ENCODE measurements at regions of chr7 and their contacts with region 1.

Region 1: DNA sequence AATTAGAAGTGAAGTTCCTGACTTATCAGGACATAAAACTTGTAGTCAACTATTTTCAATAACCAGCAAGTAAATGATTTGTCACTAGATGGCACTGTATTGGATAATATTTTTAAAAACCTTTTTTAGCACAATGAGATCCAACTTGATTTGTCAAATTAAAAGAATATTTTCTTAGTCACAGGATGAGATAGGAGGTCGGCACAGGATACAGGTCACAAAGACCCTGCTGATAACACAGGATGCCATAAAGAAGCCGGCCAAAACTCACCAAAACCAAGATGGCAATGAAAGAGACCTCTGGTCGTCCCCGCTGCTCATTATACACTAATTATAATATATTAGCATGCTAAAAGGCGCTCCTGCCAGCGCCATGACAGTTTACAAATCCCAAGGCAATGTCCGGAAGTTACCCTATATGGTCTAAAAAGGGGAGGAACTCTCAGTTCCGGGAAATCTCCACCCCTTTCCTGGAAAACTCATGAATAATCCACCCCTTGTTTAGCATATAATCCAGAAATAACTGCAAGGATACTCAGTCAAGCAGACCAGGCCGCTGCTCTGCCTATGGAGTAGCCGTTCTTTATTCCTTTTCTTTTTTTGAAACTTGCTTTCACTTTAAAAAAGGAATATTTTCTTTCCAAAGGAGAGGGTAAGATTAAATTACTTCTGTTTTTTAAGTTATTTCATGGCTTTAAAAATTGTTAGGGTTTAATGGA is 255.7 kb upstream of the MKLN1 start:
- DNase-seq: peak; percentile 37
- ATAC-seq: no peak
- H3K4me3 Mint-ChIP-seq: peak overlapping the region; percentile 24
- H3K27ac Mint-ChIP-seq: peak overlapping the region; percentile 83
- H3K4me1 Mint-ChIP-seq: peaks cover 84% of the 10 kb centered on the region
- H3K27me3 Mint-ChIP-seq: no peaks in the 10 kb centered on the region
- CTCF ChIP-seq: peak; percentile 55

Region 2: DNA sequence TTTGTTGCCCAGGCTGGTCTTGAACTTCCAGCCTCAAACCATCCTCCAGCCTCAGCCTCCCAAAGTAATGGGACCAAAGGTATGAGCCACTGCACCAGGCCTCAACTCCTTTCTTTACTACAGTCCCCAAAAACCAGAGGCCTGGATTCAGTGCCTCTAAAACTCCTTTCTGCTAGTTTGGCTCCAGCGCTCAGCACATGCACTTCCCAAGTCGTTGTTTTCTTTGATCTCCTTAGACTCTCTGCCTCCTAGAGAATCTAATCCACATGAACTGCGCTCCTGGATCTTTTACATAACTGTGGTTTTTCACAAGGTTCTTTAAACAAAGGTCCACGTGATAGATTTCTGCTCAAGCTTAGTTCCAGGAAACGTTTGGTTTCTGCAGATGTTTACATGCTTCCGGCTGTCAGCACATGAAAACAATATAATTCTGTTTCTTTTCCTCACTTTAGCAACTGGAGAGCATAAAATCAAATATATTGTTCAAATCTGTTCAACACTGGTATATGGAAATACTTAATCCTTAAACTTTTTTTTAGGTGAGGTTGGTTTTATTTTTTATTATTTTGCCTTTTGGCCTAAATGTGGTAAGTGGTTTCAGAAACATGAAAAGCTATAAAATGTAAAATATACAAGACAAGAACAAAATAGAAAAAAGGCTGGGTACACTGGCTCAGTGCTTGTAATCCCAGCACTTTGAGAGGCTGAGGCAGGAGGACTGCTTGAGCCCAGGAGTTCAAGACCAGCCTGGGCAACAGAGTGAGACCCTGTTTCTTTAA is 14.7 kb before region 1 on chr7:
- CTCF ChIA-PET with region 1: interaction called, 38 read pairs
- POLR2A ChIA-PET with region 1: interaction called, 3 read pairs
- intact Hi-C with region 1: no loop called
- DNase-seq: no peak
- ATAC-seq: peak; percentile 53
- H3K4me3 Mint-ChIP-seq: peak overlapping the region; percentile 43
- H3K27ac Mint-ChIP-seq: peak overlapping the region; percentile 97
- H3K4me1 Mint-ChIP-seq: peaks cover 65% of the 10 kb centered on the region
- H3K27me3 Mint-ChIP-seq: no peaks in the 10 kb centered on the region
- CTCF ChIP-seq: no peak

Region 3: GRCh38 chr7:131212114-131212513 is 140.2 kb after region 1 on chr7:
- CTCF ChIA-PET with region 1: no interaction called
- POLR2A ChIA-PET with region 1: no interaction called
- intact Hi-C with region 1: no loop called
- DNase-seq: no peak
- ATAC-seq: no peak
- H3K4me3 Mint-ChIP-seq: no peak overlapping the region
- H3K27ac Mint-ChIP-seq: no peak overlapping the region
- H3K4me1 Mint-ChIP-seq: no peaks in the 10 kb centered on the region
- H3K27me3 Mint-ChIP-seq: no peaks in the 10 kb centered on the region
- CTCF ChIP-seq: no peak

Region 4: DNA sequence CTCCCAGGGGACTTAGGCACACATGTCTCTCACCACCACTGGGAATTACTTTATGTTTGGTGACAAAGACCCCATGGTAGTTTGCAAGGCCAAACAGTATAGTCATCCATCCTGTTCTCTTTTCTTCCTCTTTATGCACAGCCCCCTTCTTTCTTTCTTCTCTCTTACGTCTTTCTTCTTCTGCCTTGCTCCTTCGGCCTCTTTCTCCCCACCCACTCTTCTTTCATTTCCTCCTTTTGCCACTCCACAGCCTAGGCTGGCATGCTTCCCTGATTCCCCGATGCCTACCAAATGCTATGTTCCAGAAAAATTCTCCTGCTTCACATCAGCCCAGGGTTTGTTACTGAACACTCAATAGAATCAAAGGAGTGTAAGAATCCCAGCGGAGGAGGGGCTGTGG is 193.3 kb after region 1 on chr7:
- CTCF ChIA-PET with region 1: no interaction called
- POLR2A ChIA-PET with region 1: no interaction called
- intact Hi-C with region 1: no loop called
- DNase-seq: no peak
- ATAC-seq: no peak
- H3K4me3 Mint-ChIP-seq: no peak overlapping the region
- H3K27ac Mint-ChIP-seq: no peak overlapping the region
- H3K4me1 Mint-ChIP-seq: no peaks in the 10 kb centered on the region
- H3K27me3 Mint-ChIP-seq: peaks cover 6% of the 10 kb centered on the region
- CTCF ChIP-seq: no peak

Region 5: DNA sequence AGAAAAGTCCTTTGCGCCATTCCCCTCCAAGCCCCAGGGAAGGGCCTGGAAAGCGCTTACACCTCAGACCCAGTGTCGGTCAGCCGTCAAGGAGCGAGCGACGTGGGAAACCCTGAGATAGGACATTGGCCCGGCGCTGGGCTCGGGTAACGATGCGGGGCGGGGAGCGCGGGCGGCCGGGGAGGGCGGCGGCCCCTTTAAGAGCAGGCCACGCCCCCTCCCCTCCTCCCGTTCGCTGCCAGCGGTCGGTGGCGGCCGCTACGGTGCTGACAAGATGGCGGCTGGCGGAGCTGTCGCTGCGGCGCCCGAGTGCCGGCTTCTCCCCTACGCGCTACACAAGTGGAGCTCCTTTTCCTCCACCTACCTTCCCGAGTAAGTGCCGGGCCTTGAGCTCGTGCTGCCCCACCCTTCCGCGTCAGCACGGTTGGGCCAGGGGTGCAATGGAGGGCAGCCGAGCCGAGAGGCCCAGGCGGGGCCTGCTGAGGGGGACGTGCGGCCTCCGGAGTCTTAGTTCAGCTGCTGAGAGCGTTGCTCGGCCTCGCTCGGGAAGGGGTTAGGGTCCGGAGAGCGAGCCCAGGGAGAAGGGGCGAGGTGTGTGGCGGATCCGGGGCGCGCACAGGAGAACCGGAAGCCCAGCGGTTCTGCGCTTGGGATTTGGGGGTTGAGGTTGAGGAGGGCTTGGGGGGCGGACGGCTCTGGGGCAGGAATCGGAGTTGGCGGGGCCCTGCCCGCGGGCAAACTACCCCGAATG is 255.9 kb after region 1 on chr7 and contains the start of gene MKLN1:
- CTCF ChIA-PET with region 1: no interaction called
- POLR2A ChIA-PET with region 1: interaction called, 3 read pairs
- intact Hi-C with region 1: loop called (anchors 10 kb)
- DNase-seq: peak; percentile 95
- ATAC-seq: peak; percentile 96
- H3K4me3 Mint-ChIP-seq: peak within 1 kb of the TSS; percentile 99
- H3K27ac Mint-ChIP-seq: peak within 1 kb of the TSS; percentile 95
- H3K4me1 Mint-ChIP-seq: peaks cover 47% of the 10 kb centered on the region
- H3K27me3 Mint-ChIP-seq: no peaks in the 10 kb centered on the region
- CTCF ChIP-seq: no peak
- total RNA-seq, gene MKLN1: 38.5 TPM

Region 6: GRCh38 chr7:131424219-131424822 is 352.4 kb after region 1 on chr7:
- CTCF ChIA-PET with region 1: interaction called, 5 read pairs
- POLR2A ChIA-PET with region 1: no interaction called
- intact Hi-C with region 1: loop called (anchors 10 kb)
- DNase-seq: peak; percentile 11
- ATAC-seq: peak; percentile 89
- H3K4me3 Mint-ChIP-seq: no peak overlapping the region
- H3K27ac Mint-ChIP-seq: no peak overlapping the region
- H3K4me1 Mint-ChIP-seq: peaks cover 11% of the 10 kb centered on the region
- H3K27me3 Mint-ChIP-seq: no peaks in the 10 kb centered on the region
- CTCF ChIP-seq: peak; percentile 80